ENCODE measurements at regions of chr6 and their contacts with region 1.

Region 1: DNA sequence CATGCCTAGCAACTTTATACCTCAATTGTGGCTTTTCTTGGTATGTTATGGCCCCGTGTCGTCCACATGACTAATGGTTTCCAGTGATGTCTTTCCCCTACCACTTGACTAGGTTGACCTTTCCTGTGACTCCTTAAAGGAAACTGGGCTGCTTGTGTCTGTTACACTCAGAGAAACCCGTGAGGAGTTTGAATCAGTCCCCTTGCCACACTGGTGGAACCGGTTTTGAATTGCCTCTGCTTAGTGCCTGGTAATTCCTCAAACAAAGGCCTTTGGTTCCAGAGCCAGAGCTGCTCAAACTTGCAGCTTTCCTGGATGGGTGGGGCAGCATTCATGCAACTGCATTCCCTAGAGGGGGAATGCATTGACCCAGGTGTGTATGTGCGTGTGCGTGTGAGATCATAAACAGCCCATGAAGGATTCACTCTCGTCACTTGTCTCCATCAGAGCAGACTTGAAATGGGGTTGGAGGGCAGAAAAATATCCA is 22.0 kb downstream of the ECT2L start:
- DNase-seq: peak; percentile 13
- ATAC-seq: peak; percentile 15
- H3K4me3 ChIP-seq: no peak overlapping the region
- H3K4me3 Mint-ChIP-seq: no peak overlapping the region
- H3K27ac ChIP-seq: peak overlapping the region in 1 of 2 donors; percentile 28
- H3K27ac Mint-ChIP-seq: peak overlapping the region; percentile 68
- H3K4me1 ChIP-seq: peaks cover 11 to 20% of the 10 kb centered on the region in 2 donors
- H3K4me1 Mint-ChIP-seq: peaks cover 30% of the 10 kb centered on the region
- H3K27me3 ChIP-seq: no peaks in the 10 kb centered on the region
- H3K27me3 Mint-ChIP-seq: no peaks in the 10 kb centered on the region
- CTCF ChIP-seq: no peak

Region 2: DNA sequence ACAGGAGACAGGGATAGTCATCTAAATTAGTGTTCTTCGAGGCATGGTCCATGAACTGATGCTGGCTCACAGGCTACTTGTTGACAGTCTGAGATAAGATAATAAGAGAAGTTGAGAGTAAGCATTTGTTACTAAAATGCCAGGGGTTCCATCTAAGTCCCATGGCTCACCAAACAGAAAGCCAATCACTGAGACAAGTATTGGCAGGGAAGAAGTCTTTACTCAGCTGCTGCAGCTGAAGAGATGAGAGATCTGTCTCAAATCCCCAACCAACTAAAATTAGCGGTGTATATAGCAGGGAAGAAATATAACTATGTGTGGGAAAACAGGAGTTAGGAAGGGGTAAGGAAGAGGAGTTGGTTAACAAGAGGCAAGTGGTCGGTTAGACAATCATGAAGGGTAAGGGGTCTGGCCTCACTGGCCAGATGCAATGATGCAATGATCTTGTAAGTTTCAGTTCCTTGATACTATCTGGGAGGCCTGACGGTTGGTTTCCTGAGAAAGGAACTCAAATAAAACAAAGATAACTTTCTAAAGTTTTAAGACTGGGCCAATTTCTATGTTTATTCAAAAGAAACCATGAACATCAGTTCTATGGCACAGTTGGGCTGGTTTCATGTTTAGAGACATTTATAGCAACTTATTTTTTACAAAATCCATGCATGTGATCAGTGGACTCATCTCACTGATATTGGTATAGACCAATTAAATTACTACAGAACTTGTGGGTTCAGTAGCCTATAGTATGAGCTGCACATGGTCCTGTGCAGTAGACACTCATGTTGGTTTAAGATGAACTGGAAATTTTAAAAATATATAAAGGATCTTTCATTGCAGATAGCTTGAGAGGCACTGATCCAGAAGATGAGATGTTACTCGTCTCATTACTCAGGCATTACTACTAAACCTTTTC is 423.7 kb before region 1 on chr6:
- CTCF ChIA-PET with region 1: no interaction called
- POLR2A ChIA-PET with region 1: no interaction called
- intact Hi-C with region 1: no loop called
- DNase-seq: peak; percentile 49
- ATAC-seq: peak; percentile 63
- H3K4me3 ChIP-seq: no peak overlapping the region
- H3K4me3 Mint-ChIP-seq: peak overlapping the region; percentile 5
- H3K27ac ChIP-seq: peak overlapping the region; percentile 28 to 58
- H3K27ac Mint-ChIP-seq: peak overlapping the region; percentile 51
- H3K4me1 ChIP-seq: peaks cover 18 to 19% of the 10 kb centered on the region in 2 donors
- H3K4me1 Mint-ChIP-seq: peaks cover 21% of the 10 kb centered on the region
- H3K27me3 ChIP-seq: no peaks in the 10 kb centered on the region
- H3K27me3 Mint-ChIP-seq: peaks cover 4% of the 10 kb centered on the region
- CTCF ChIP-seq: no peak

Region 3: DNA sequence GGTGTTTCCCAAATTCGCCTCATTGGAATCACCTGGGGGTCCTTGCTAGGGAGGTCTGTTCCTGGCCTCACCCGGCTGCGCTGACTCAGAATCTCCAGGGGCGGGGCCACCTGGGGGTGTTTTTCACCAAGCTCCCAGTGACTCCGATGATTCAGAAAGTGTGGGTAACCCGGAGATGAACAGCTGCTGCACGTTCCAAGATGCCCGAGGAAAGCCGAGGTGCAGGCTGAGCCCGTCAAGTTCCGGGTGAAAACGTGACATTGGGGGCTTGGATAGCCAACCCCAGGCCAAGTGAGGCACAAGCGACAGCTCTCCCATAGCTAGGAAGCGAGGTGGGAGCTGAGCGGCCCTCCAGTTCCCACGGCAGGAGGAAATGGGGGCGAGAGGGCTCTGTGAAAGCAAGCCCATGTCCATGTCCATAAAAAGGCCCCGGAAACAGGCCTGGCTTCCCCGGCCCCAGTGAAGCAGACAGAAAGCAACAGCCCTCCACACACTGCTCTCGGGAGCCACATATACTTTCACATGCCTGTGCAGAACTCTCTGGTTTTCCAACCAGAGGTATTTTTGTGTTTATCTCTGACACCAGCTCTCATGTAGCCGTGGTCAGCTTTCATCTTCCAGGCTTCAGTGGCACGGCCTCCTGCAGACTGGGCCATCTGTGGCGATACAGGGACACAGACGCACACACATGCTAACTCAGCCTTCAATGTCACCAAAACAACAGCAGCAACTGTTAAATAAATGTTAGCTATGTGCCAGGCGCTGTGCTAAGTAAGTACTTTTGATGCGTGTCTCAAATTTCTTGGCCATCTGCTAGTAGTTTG is 134.9 kb before region 1 on chr6:
- CTCF ChIA-PET with region 1: no interaction called
- POLR2A ChIA-PET with region 1: no interaction called
- intact Hi-C with region 1: no loop called
- DNase-seq: no peak
- ATAC-seq: no peak
- H3K4me3 ChIP-seq: no peak overlapping the region
- H3K4me3 Mint-ChIP-seq: no peak overlapping the region
- H3K27ac ChIP-seq: no peak overlapping the region
- H3K27ac Mint-ChIP-seq: no peak overlapping the region
- H3K4me1 ChIP-seq: no peaks in the 10 kb centered on the region
- H3K4me1 Mint-ChIP-seq: no peaks in the 10 kb centered on the region
- H3K27me3 ChIP-seq: no peaks in the 10 kb centered on the region
- H3K27me3 Mint-ChIP-seq: peaks cover 10% of the 10 kb centered on the region
- CTCF ChIP-seq: no peak

Region 4: DNA sequence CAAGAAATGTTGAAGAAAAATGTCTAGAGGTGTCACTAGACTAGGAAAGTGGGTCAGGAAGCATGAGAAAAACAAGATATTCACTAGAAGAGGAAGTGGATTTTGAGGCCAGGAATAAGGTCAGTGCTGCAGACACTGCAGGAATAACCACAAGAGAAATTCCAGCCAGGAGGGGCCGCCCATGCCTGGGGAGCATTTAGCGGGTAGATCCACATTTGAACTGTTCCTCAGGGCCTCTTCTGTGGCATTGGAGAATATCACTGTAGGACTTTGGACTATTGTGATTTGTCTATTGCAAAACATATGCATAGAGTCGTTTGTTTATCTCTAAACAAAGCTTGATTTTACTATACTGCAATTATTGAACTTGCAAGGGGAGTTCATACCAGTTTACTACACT is 93.8 kb before region 1 on chr6:
- CTCF ChIA-PET with region 1: no interaction called
- POLR2A ChIA-PET with region 1: no interaction called
- intact Hi-C with region 1: no loop called
- DNase-seq: no peak
- ATAC-seq: no peak
- H3K4me3 ChIP-seq: no peak overlapping the region
- H3K4me3 Mint-ChIP-seq: no peak overlapping the region
- H3K27ac ChIP-seq: no peak overlapping the region
- H3K27ac Mint-ChIP-seq: no peak overlapping the region
- H3K4me1 ChIP-seq: peaks cover 0 to 6% of the 10 kb centered on the region in 2 donors
- H3K4me1 Mint-ChIP-seq: peaks cover 13% of the 10 kb centered on the region
- H3K27me3 ChIP-seq: no peaks in the 10 kb centered on the region
- H3K27me3 Mint-ChIP-seq: no peaks in the 10 kb centered on the region
- CTCF ChIP-seq: no peak

Region 5: GRCh38 chr6:138805016-138805765 is 12.7 kb before region 1 on chr6:
- CTCF ChIA-PET with region 1: interaction called, 12 read pairs
- POLR2A ChIA-PET with region 1: no interaction called
- intact Hi-C with region 1: no loop called
- DNase-seq: no peak
- ATAC-seq: no peak
- H3K4me3 ChIP-seq: no peak overlapping the region
- H3K4me3 Mint-ChIP-seq: no peak overlapping the region
- H3K27ac ChIP-seq: no peak overlapping the region
- H3K27ac Mint-ChIP-seq: no peak overlapping the region
- H3K4me1 ChIP-seq: peaks cover 6% of the 10 kb centered on the region in 2 donors
- H3K4me1 Mint-ChIP-seq: peaks cover 9% of the 10 kb centered on the region
- H3K27me3 ChIP-seq: no peaks in the 10 kb centered on the region
- H3K27me3 Mint-ChIP-seq: no peaks in the 10 kb centered on the region
- CTCF ChIP-seq: no peak

Region 6: DNA sequence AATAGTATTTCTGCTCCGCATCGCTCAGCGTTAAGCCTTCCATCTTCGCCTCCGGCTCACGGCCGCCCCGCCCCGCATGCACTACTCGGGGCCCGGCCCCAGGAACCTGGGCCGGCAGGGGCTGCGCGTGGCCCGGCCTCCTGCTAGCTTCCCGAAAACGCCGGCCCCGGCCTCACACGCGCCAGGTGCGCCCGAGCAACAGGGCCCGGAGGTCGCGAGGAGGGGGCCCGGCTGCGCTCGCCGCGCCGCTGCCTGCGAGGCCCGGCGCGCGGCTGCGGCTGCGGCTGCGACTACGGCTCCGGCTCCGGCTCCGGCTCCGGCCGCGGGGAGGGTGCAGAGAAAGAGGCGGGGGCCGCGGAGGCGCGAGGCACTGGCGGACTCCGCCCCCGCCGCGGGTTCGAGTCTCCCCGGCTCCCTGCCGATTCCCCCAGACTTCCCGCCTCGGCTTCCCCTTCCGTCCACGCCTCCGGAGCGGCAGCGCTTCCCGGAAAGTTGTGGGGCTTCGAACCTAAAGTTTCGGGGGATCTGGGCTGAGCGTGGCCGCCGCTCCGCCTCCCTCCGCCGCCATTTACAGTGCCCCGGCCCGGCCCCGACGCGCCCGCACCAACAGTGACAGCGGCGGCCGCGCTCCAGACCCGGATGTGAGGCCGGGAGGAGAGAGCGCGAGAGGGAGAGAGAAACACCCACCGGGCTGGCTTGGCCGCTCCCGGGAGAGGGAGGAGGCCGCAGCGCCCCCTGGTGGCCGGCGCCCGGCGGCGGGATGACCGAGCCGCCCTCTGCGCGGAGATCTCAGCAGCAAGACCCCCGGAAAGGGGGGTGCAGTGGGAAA is 170.0 kb after region 1 on chr6 and contains the start of gene REPS1:
- CTCF ChIA-PET with region 1: interaction called, 53 read pairs
- POLR2A ChIA-PET with region 1: no interaction called
- intact Hi-C with region 1: loop called (anchors 1 kb)
- DNase-seq: peak; percentile 91
- ATAC-seq: peak; percentile 91
- H3K4me3 ChIP-seq: peak within 1 kb of the TSS; percentile 52 to 97 (median 87)
- H3K4me3 Mint-ChIP-seq: peak within 1 kb of the TSS; percentile 87
- H3K27ac ChIP-seq: peak within 1 kb of the TSS; percentile 78 to 90
- H3K27ac Mint-ChIP-seq: peak within 1 kb of the TSS; percentile 95
- H3K4me1 ChIP-seq: peaks cover 23 to 26% of the 10 kb centered on the region in 2 donors
- H3K4me1 Mint-ChIP-seq: peaks cover 21% of the 10 kb centered on the region
- H3K27me3 ChIP-seq: no peaks in the 10 kb centered on the region
- H3K27me3 Mint-ChIP-seq: no peaks in the 10 kb centered on the region
- CTCF ChIP-seq: peak; percentile 98
- total RNA-seq, gene REPS1: 55.5 and 57.1 TPM in 2 replicates

Region 7: GRCh38 chr6:139028658-139029469 is 211.0 kb after region 1 on chr6 and contains the start of gene ABRACL:
- CTCF ChIA-PET with region 1: interaction called, 4 read pairs
- POLR2A ChIA-PET with region 1: no interaction called
- intact Hi-C with region 1: loop called (anchors 10 kb)
- DNase-seq: peak; percentile 87
- ATAC-seq: peak; percentile 72
- H3K4me3 ChIP-seq: peak within 1 kb of the TSS; percentile 84 to 100 (median 89)
- H3K4me3 Mint-ChIP-seq: no peak within 1 kb of the TSS
- H3K27ac ChIP-seq: peak within 1 kb of the TSS; percentile 87 to 92
- H3K27ac Mint-ChIP-seq: peak within 1 kb of the TSS; percentile 94
- H3K4me1 ChIP-seq: peaks cover 27 to 28% of the 10 kb centered on the region in 2 donors
- H3K4me1 Mint-ChIP-seq: peaks cover 20% of the 10 kb centered on the region
- H3K27me3 ChIP-seq: no peaks in the 10 kb centered on the region
- H3K27me3 Mint-ChIP-seq: no peaks in the 10 kb centered on the region
- CTCF ChIP-seq: no peak
- total RNA-seq, gene ABRACL: 22.6 and 23.0 TPM in 2 replicates

Region 8: GRCh38 chr6:139050770-139051313 is 233.0 kb after region 1 on chr6:
- CTCF ChIA-PET with region 1: interaction called, 10 read pairs
- POLR2A ChIA-PET with region 1: no interaction called
- intact Hi-C with region 1: loop called (anchors 1 kb)
- DNase-seq: peak; percentile 15
- ATAC-seq: no peak
- H3K4me3 ChIP-seq: no peak overlapping the region
- H3K4me3 Mint-ChIP-seq: no peak overlapping the region
- H3K27ac ChIP-seq: no peak overlapping the region
- H3K27ac Mint-ChIP-seq: no peak overlapping the region
- H3K4me1 ChIP-seq: no peaks in the 10 kb centered on the region
- H3K4me1 Mint-ChIP-seq: no peaks in the 10 kb centered on the region
- H3K27me3 ChIP-seq: no peaks in the 10 kb centered on the region
- H3K27me3 Mint-ChIP-seq: peaks cover 5% of the 10 kb centered on the region
- CTCF ChIP-seq: no peak

Region 9: GRCh38 chr6:139109558-139109957 is 291.7 kb after region 1 on chr6:
- CTCF ChIA-PET with region 1: no interaction called
- POLR2A ChIA-PET with region 1: no interaction called
- intact Hi-C with region 1: loop called (anchors 2 kb)
- DNase-seq: peak; percentile 29
- ATAC-seq: peak; percentile 28
- H3K4me3 ChIP-seq: no peak overlapping the region
- H3K4me3 Mint-ChIP-seq: no peak overlapping the region
- H3K27ac ChIP-seq: no peak overlapping the region
- H3K27ac Mint-ChIP-seq: peak overlapping the region; percentile 27
- H3K4me1 ChIP-seq: no peaks in the 10 kb centered on the region
- H3K4me1 Mint-ChIP-seq: no peaks in the 10 kb centered on the region
- H3K27me3 ChIP-seq: no peaks in the 10 kb centered on the region
- H3K27me3 Mint-ChIP-seq: no peaks in the 10 kb centered on the region
- CTCF ChIP-seq: peak; percentile 31

Region 10: GRCh38 chr6:139250296-139251044 is 432.6 kb after region 1 on chr6:
- CTCF ChIA-PET with region 1: interaction called, 3 read pairs
- POLR2A ChIA-PET with region 1: no interaction called
- intact Hi-C with region 1: loop called (anchors 10 kb)
- DNase-seq: peak; percentile 65
- ATAC-seq: peak; percentile 99
- H3K4me3 ChIP-seq: no peak overlapping the region
- H3K4me3 Mint-ChIP-seq: no peak overlapping the region
- H3K27ac ChIP-seq: no peak overlapping the region
- H3K27ac Mint-ChIP-seq: no peak overlapping the region
- H3K4me1 ChIP-seq: peaks cover 5 to 6% of the 10 kb centered on the region in 2 donors
- H3K4me1 Mint-ChIP-seq: peaks cover 13% of the 10 kb centered on the region
- H3K27me3 ChIP-seq: no peaks in the 10 kb centered on the region
- H3K27me3 Mint-ChIP-seq: no peaks in the 10 kb centered on the region
- CTCF ChIP-seq: peak; percentile 78